Heart left ventricle (tissue), 16 donors: ENCODE measurements at regions of chr20 and their contacts with region 1.

Region 1: GRCh38 chr20:5402903-5403531 is 86.3 kb upstream of the PROKR2 start:
- DNase-seq: no peak
- ATAC-seq: no peak
- H3K4me3 ChIP-seq: no peak overlapping the region
- H3K27ac ChIP-seq: no peak overlapping the region
- H3K4me1 ChIP-seq: no peaks in the 10 kb centered on the region
- H3K27me3 ChIP-seq: no peaks in the 10 kb centered on the region
- CTCF ChIP-seq: peak in 3 of 12 donors; percentile 9 to 23 (median 17)
- POLR2A ChIP-seq: no peak

Region 2: DNA sequence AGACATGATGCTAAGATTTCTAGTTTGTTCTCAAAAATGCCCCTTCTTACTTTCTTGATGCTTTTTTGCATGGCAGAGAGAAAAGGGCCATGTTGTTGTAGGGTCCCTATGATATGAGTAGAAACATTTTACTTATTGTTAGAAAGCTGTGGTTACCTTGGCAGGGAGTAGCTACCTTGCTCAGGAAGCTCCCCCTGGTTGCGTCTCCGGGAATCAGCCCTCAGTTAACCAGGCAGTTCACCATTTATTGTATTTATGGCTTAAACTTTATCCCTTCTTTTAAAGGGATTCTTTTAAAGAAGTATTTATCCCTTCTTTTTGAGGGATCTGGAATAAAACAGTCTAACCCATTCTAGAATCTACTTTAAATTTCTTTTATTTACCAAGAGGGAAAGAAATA is 27.7 kb after region 1 on chr20:
- intact Hi-C with region 1: loop called in 1 of 10 experiments (anchors 1 kb)
- DNase-seq: no peak
- ATAC-seq: no peak
- H3K4me3 ChIP-seq: no peak overlapping the region
- H3K27ac ChIP-seq: no peak overlapping the region
- H3K4me1 ChIP-seq: no peaks in the 10 kb centered on the region
- H3K27me3 ChIP-seq: no peaks in the 10 kb centered on the region
- CTCF ChIP-seq: no peak
- POLR2A ChIP-seq: no peak